Esophagus squamous epithelium (tissue), 5 donors: ENCODE measurements at regions of chr11 and their contacts with region 1.

Region 1: DNA sequence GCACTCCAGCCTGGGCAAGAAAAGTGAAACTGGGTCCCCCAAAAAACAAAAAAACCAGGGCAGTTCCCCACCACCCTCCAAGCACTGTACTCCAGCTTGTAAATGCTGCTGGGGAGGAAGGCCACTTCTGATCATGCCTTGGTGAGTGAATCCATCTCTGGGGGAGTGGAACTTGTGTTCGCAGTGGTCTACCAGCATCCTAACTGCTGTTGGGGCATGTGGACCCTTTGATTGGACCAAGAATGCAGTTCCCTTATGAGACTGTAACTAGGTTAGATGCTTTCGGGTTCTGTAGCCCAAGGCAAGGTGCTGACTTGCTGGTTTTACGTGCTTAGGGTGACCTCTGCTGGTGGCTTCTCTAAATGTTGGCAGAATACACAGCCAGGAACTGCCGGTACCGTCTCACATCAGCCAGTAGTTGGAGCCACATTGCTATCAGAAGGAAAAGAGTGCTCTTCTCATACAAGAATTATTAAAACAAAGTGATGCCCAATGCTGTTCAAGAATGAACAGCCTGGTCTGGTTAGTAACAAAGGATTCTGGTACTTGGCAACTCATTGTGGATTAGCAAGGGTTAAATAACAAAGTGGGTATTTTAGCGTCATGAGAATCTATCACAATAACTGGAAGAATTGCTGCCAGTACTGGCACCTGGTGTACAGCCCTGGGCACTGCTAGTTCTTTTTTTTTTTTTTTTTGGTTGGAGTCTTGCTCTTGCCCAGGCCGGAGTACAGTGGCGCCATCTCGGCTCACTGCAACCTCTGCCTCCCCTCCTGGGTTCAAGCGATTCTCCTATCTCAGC is 13.0 kb downstream of the EIF1AD start:
- DNase-seq: peak; percentile 64
- H3K4me3 ChIP-seq: no peak overlapping the region
- H3K27ac ChIP-seq: peak overlapping the region in 1 of 4 donors; percentile 15
- H3K4me1 ChIP-seq: peaks cover 0 to 6% (median 0%) of the 10 kb centered on the region in 3 donors
- H3K27me3 ChIP-seq: no peaks in the 10 kb centered on the region
- CTCF ChIP-seq: peak; percentile 86 to 99 (median 96)
- POLR2A ChIP-seq: no peak

Region 2: DNA sequence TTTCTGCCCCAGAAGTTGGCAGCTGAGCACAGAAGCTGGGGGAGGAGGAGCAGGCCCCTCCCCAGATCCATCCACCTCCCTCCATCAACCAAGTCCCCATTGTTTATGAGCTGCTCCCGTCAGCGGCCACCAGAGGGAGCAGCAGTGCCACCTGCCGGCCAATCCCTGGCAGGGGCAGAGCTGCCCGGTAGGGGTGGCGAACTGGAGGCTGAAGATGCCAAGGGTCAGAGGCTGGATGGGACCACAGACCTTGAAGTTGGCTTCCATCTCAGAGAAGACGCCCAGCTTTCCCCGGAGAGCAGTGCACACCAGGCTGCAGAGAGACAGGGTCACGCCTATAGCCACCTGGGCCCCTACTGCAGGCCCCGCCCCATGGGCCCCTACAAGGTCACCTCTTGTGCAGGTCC is 104.3 kb before region 1 on chr11:
- intact Hi-C with region 1: loop called (anchors 5 kb)
- DNase-seq: no peak
- H3K4me3 ChIP-seq: no peak overlapping the region
- H3K27ac ChIP-seq: peak overlapping the region in 3 of 4 donors; percentile 18 to 40 (median 39)
- H3K4me1 ChIP-seq: peaks cover 14 to 49% (median 18%) of the 10 kb centered on the region in 3 donors
- H3K27me3 ChIP-seq: no peaks in the 10 kb centered on the region
- CTCF ChIP-seq: peak; percentile 98 to 100 (median 99)
- POLR2A ChIP-seq: no peak

Region 3: GRCh38 chr11:66069715-66070603 is 81.0 kb after region 1 on chr11 and contains the start of gene PACS1:
- intact Hi-C with region 1: no loop called
- DNase-seq: no peak
- H3K4me3 ChIP-seq: peak within 1 kb of the TSS; percentile 59 to 95 (median 74)
- H3K27ac ChIP-seq: peak within 1 kb of the TSS; percentile 91 to 97 (median 95)
- H3K4me1 ChIP-seq: peaks cover 23 to 51% (median 30%) of the 10 kb centered on the region in 3 donors
- H3K27me3 ChIP-seq: no peaks in the 10 kb centered on the region
- CTCF ChIP-seq: peak in 3 of 6 experiments; percentile 2 to 48 (median 39)
- POLR2A ChIP-seq: peak in 2 of 4 donors; percentile 37 to 38
- total RNA-seq, gene PACS1: 17.9 to 37.6 (median 25.4) TPM